Panc1 (cell line): ENCODE measurements at regions of chr6 and their contacts with region 1.

Region 1: DNA sequence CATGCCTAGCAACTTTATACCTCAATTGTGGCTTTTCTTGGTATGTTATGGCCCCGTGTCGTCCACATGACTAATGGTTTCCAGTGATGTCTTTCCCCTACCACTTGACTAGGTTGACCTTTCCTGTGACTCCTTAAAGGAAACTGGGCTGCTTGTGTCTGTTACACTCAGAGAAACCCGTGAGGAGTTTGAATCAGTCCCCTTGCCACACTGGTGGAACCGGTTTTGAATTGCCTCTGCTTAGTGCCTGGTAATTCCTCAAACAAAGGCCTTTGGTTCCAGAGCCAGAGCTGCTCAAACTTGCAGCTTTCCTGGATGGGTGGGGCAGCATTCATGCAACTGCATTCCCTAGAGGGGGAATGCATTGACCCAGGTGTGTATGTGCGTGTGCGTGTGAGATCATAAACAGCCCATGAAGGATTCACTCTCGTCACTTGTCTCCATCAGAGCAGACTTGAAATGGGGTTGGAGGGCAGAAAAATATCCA is 22.0 kb downstream of the ECT2L start:
- DNase-seq: no peak
- ATAC-seq: no peak; the same call in 1 of the 2 replicates
- H3K4me3 ChIP-seq: no peak overlapping the region
- H3K27ac ChIP-seq: no peak overlapping the region
- H3K4me1 ChIP-seq: no peaks in the 10 kb centered on the region
- H3K27me3 ChIP-seq: no peaks in the 10 kb centered on the region
- CTCF ChIP-seq: no peak

Region 2: DNA sequence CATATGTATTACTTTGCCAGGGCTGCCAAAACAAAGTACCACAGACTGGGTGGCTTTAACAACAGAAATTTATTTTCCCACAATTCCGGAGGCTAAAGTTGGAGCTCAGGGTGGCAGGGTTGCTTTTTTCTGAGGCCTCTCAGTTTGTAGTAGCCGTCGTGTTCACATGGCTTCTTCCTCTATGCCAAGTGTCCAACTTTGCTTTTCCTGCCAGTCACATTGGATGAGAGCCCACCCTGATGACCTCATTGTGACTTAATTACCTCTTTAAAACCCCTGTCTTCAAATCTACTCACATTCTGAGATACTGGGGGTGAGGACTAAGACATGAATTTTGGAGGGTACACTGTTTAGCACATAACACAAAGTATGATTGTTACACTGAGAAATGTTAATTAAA is 31.9 kb before region 1 on chr6:
- CTCF ChIA-PET with region 1: no interaction called
- POLR2A ChIA-PET with region 1: no interaction called
- in situ Hi-C with region 1: no loop called
- intact Hi-C with region 1: no loop called
- DNase-seq: no peak
- ATAC-seq: no peak
- H3K4me3 ChIP-seq: no peak overlapping the region
- H3K27ac ChIP-seq: no peak overlapping the region
- H3K4me1 ChIP-seq: no peaks in the 10 kb centered on the region
- H3K27me3 ChIP-seq: no peaks in the 10 kb centered on the region
- CTCF ChIP-seq: no peak

Region 3: GRCh38 chr6:138987640-138988468 is 170.0 kb after region 1 on chr6 and contains the start of gene REPS1:
- CTCF ChIA-PET with region 1: interaction called, 8 read pairs
- POLR2A ChIA-PET with region 1: no interaction called
- in situ Hi-C with region 1: no loop called
- intact Hi-C with region 1: loop called (anchors 1 kb)
- DNase-seq: peak; percentile 45
- ATAC-seq: peak; percentile 98
- H3K4me3 ChIP-seq: peak within 1 kb of the TSS; percentile 76 to 81
- H3K27ac ChIP-seq: peak within 1 kb of the TSS; percentile 64
- H3K4me1 ChIP-seq: peaks cover 10% of the 10 kb centered on the region
- H3K27me3 ChIP-seq: no peaks in the 10 kb centered on the region
- CTCF ChIP-seq: peak; percentile 96
- total RNA-seq, gene REPS1: 28.6 TPM